Mammary epithelial cell (primary cell): ENCODE measurements at regions of chr7 and their contacts with region 1.

Region 1: GRCh38 chr7:157138424-157139110 is at the start of gene UBE3C:
- DNase-seq: peak; percentile 86
- H3K4me3 ChIP-seq: peak within 1 kb of the TSS; percentile 81 to 99 (median 86)
- H3K27ac ChIP-seq: peak within 1 kb of the TSS; percentile 80
- H3K4me1 ChIP-seq: peaks cover 22% of the 10 kb centered on the region
- H3K27me3 ChIP-seq: no peaks in the 10 kb centered on the region
- CTCF ChIP-seq: no peak
- total RNA-seq, gene UBE3C: 108 to 109 TPM

Region 2: GRCh38 chr7:156903232-156903909 is 235.2 kb before region 1 on chr7:
- CTCF ChIA-PET with region 1: no interaction called
- dilution Hi-C with region 1: no loop called
- in situ Hi-C with region 1: no loop called
- intact Hi-C with region 1: loop called (anchors 10 kb)
- DNase-seq: peak; percentile 79
- H3K4me3 ChIP-seq: no peak overlapping the region
- H3K27ac ChIP-seq: no peak overlapping the region
- H3K4me1 ChIP-seq: peaks cover 23% of the 10 kb centered on the region
- H3K27me3 ChIP-seq: no peaks in the 10 kb centered on the region
- CTCF ChIP-seq: no peak

Region 3: DNA sequence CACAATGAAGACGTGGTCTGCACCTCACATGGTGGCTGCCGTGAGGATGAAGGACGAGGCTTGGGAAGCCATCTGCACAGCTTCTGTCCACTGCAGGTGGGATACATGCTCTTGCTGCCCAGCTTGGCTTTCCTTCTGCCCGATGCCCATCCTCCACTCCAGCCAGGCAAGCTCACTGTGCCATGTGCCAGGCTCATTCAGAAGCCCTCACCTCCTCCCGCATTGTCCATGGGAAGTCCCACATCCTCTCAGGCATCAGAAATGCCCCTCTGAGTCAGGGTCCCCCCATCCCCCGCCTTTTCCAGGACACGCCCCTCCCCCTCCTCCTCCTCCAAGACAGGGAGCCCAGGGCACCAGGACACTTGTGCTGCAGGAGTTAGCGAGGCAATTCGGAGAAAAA is 193.7 kb before region 1 on chr7:
- CTCF ChIA-PET with region 1: no interaction called
- dilution Hi-C with region 1: no loop called
- in situ Hi-C with region 1: no loop called
- intact Hi-C with region 1: no loop called
- DNase-seq: no peak
- H3K4me3 ChIP-seq: no peak overlapping the region
- H3K27ac ChIP-seq: no peak overlapping the region
- H3K4me1 ChIP-seq: peaks cover 20% of the 10 kb centered on the region
- H3K27me3 ChIP-seq: no peaks in the 10 kb centered on the region
- CTCF ChIP-seq: no peak

Region 4: GRCh38 chr7:156969972-156970420 is 168.6 kb before region 1 on chr7:
- CTCF ChIA-PET with region 1: interaction called, 3 read pairs
- dilution Hi-C with region 1: no loop called
- in situ Hi-C with region 1: loop called in 1 of 2 experiments (anchors 10 kb)
- intact Hi-C with region 1: loop called (anchors 1 kb)
- DNase-seq: peak; percentile 85
- H3K4me3 ChIP-seq: no peak overlapping the region
- H3K27ac ChIP-seq: peak overlapping the region; percentile 72
- H3K4me1 ChIP-seq: peaks cover 29% of the 10 kb centered on the region
- H3K27me3 ChIP-seq: no peaks in the 10 kb centered on the region
- CTCF ChIP-seq: peak in 1 of 2 donors; percentile 28

Region 5: DNA sequence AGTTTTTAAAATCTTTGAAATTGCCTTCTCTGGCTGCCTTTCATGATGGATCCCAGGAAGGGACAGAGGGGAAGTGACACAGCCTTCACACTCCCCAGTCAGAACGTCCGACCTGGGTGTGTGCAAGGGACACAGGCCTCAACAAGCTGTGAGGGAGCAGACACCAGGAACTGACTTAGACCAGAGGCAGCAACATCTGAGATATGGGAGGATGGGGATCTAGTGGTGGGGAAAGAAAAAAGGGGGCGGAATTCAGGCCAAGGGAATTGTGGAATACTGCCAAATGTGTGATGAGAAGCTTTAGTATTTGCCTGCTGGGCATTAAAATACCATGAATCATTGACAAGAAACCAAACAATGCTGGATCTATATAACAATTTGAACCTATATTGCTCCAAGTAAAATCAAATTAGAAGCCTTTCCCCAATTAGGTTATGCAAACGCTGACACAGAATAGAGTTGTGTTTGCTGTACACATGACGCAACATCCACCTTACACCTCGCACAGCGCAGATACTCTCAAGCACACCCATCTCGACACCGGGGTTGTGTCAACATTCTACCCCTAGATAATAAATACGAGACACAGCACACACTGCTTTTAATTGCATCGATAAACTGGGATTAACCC is 110.9 kb before region 1 on chr7:
- CTCF ChIA-PET with region 1: no interaction called
- dilution Hi-C with region 1: no loop called
- in situ Hi-C with region 1: no loop called
- intact Hi-C with region 1: loop called (anchors 2 kb)
- DNase-seq: peak; percentile 98
- H3K4me3 ChIP-seq: no peak overlapping the region
- H3K27ac ChIP-seq: peak overlapping the region; percentile 26
- H3K4me1 ChIP-seq: peaks cover 12% of the 10 kb centered on the region
- H3K27me3 ChIP-seq: no peaks in the 10 kb centered on the region
- CTCF ChIP-seq: no peak

Region 6: GRCh38 chr7:157204134-157204533 is 65.6 kb after region 1 on chr7:
- CTCF ChIA-PET with region 1: no interaction called
- dilution Hi-C with region 1: no loop called
- in situ Hi-C with region 1: no loop called
- intact Hi-C with region 1: no loop called
- DNase-seq: no peak
- H3K4me3 ChIP-seq: no peak overlapping the region
- H3K27ac ChIP-seq: no peak overlapping the region
- H3K4me1 ChIP-seq: no peaks in the 10 kb centered on the region
- H3K27me3 ChIP-seq: no peaks in the 10 kb centered on the region
- CTCF ChIP-seq: no peak

Region 7: GRCh38 chr7:157347217-157347904 is 208.8 kb after region 1 on chr7:
- CTCF ChIA-PET with region 1: no interaction called
- dilution Hi-C with region 1: no loop called
- in situ Hi-C with region 1: no loop called
- intact Hi-C with region 1: loop called (anchors 1 kb)
- DNase-seq: peak; percentile 83
- H3K4me3 ChIP-seq: no peak overlapping the region
- H3K27ac ChIP-seq: peak overlapping the region; percentile 51
- H3K4me1 ChIP-seq: peaks cover 30% of the 10 kb centered on the region
- H3K27me3 ChIP-seq: no peaks in the 10 kb centered on the region
- CTCF ChIP-seq: no peak